ENCODE measurements at regions of chr2 and their contacts with region 1.

Region 1: DNA sequence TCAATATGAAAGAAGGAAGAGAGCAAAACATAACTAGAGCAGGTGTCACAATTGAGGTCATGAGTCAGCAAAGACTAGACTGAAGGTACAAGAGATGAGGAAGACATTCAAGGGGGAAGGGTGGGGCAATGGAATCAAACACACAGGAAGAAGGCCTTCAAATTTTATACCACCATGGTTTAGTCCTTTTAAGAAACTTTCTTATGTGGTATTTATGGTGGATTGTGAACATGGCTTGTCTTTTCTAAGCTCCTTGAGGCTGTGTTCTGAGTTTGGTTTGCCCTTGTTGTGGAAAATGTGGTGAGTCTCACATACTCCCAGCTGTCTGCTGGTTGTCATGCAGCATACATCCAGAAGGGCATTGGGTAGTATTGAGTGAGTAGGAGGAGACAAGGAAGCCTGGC is 62.1 kb downstream of the NABP1 start:
- DNase-seq: peak in 8 of 9 donors; percentile 42 to 83 (median 78)
- ATAC-seq: peak; percentile 95
- H3K4me3 ChIP-seq: no peak overlapping the region
- H3K4me3 Mint-ChIP-seq: peak overlapping the region; percentile 0 to 62 (median 21)
- H3K27ac ChIP-seq: no peak overlapping the region
- H3K27ac Mint-ChIP-seq: peak overlapping the region; percentile 0 to 89 (median 44)
- H3K4me1 ChIP-seq: peaks cover 14% of the 10 kb centered on the region in 2 donors
- H3K4me1 Mint-ChIP-seq: peaks cover 13 to 18% (median 13%) of the 10 kb centered on the region in 7 donors
- H3K27me3 ChIP-seq: no peaks in the 10 kb centered on the region
- H3K27me3 Mint-ChIP-seq: peaks cover 10 to 45% (median 21%) of the 10 kb centered on the region in 5 donors

Region 2: DNA sequence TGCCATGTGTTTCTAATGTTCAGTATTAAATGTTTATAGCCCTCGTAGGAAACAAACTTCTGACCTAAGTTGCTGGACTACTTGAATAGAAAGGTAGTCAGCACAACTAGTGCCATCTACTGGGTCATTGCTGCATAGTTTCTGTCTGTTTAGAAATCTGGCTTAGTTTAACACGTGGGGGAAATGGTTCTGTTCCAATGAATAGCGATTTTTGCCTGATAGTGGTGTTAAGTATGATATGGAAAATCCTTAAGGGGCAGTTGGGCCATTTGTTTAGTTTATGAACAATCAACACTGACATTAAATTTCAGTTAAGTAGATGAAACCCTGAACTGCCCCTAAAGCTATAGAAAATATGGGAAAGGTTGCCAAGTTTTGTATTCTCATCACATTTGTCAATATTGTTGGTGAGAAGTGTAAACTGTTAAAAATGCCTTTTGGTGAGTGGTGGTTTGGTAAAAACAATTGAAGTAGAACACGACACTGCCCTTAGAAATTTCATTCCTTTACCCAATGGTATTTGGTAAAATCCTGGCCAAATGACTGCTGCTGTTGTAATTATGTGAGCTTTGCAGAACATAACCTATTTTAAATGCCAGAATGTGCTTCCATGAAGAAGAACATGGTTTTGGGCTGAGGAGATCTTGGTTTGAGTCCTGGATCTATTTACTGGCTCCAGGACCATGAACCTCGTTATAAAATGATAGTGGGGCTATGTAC is 48.8 kb before region 1 on chr2:
- CTCF ChIA-PET with region 1: no interaction called
- POLR2A ChIA-PET with region 1: no interaction called
- intact Hi-C with region 1: loop called in 1 of 2 experiments (anchors 1 kb)
- DNase-seq: peak in 7 of 9 donors; percentile 44 to 69 (median 61)
- ATAC-seq: peak; percentile 93
- H3K4me3 ChIP-seq: no peak overlapping the region
- H3K4me3 Mint-ChIP-seq: no peak overlapping the region
- H3K27ac ChIP-seq: no peak overlapping the region
- H3K27ac Mint-ChIP-seq: peak overlapping the region in 5 of 9 donors; percentile 31 to 61 (median 44)
- H3K4me1 ChIP-seq: peaks cover 3 to 11% of the 10 kb centered on the region in 2 donors
- H3K4me1 Mint-ChIP-seq: peaks cover 8 to 28% (median 15%) of the 10 kb centered on the region in 7 donors
- H3K27me3 ChIP-seq: no peaks in the 10 kb centered on the region
- H3K27me3 Mint-ChIP-seq: no peaks in the 10 kb centered on the region

Measured in naive thymus-derived CD4-positive, alpha-beta T cell (primary cell).